Heart right ventricle (tissue), 16 donors: ENCODE measurements at regions of chr21 and their contacts with region 1.

Region 1: GRCh38 chr21:31198575-31198974 is 145.5 kb downstream of the TIAM1 start:
- DNase-seq: no peak
- ATAC-seq: peak in 4 of 8 donors; percentile 45 to 56 (median 46)
- H3K4me3 ChIP-seq: no peak overlapping the region
- H3K27ac ChIP-seq: no peak overlapping the region
- H3K4me1 ChIP-seq: peaks cover 0 to 27% (median 0%) of the 10 kb centered on the region in 9 donors
- H3K27me3 ChIP-seq: peaks cover 0 to 16% (median 0%) of the 10 kb centered on the region in 7 donors
- CTCF ChIP-seq: peak; percentile 33 to 78 (median 69)

Region 2: GRCh38 chr21:31580866-31581276 is 382.3 kb after region 1 on chr21:
- intact Hi-C with region 1: loop called in 8 of 10 experiments (anchors 1 to 5 kb)
- DNase-seq: peak; percentile 48 to 62
- ATAC-seq: peak in 7 of 8 donors; percentile 58 to 85 (median 69)
- H3K4me3 ChIP-seq: no peak overlapping the region
- H3K27ac ChIP-seq: no peak overlapping the region
- H3K4me1 ChIP-seq: peaks cover 0 to 9% (median 0%) of the 10 kb centered on the region in 9 donors
- H3K27me3 ChIP-seq: peaks cover 0 to 19% (median under 1%) of the 10 kb centered on the region in 7 donors
- CTCF ChIP-seq: peak; percentile 66 to 86 (median 82)